Panc1 (cell line): ENCODE measurements at regions of chr10 and their contacts with region 1.

Region 1: GRCh38 chr10:30724296-30724695 is 94.7 kb upstream of the LYZL2 start:
- DNase-seq: no peak
- ATAC-seq: no peak
- H3K4me3 ChIP-seq: no peak overlapping the region
- H3K27ac ChIP-seq: no peak overlapping the region
- H3K4me1 ChIP-seq: no peaks in the 10 kb centered on the region
- H3K27me3 ChIP-seq: no peaks in the 10 kb centered on the region
- CTCF ChIP-seq: no peak

Region 2: GRCh38 chr10:30762620-30763019 is 38.3 kb after region 1 on chr10:
- CTCF ChIA-PET with region 1: no interaction called
- POLR2A ChIA-PET with region 1: interaction called, 10 read pairs
- in situ Hi-C with region 1: no loop called
- intact Hi-C with region 1: no loop called
- DNase-seq: no peak
- ATAC-seq: no peak
- H3K4me3 ChIP-seq: no peak overlapping the region
- H3K27ac ChIP-seq: no peak overlapping the region
- H3K4me1 ChIP-seq: no peaks in the 10 kb centered on the region
- H3K27me3 ChIP-seq: no peaks in the 10 kb centered on the region
- CTCF ChIP-seq: no peak

Region 3: GRCh38 chr10:30783939-30784500 is 59.7 kb after region 1 on chr10:
- CTCF ChIA-PET with region 1: no interaction called
- POLR2A ChIA-PET with region 1: no interaction called
- in situ Hi-C with region 1: no loop called
- intact Hi-C with region 1: loop called (anchors 2 kb)
- DNase-seq: peak; percentile 42
- ATAC-seq: peak; percentile 75
- H3K4me3 ChIP-seq: peak overlapping the region in 1 of 2 experiments; percentile 30; a peak in 1 of 4 replicates
- H3K27ac ChIP-seq: no peak overlapping the region
- H3K4me1 ChIP-seq: no peaks in the 10 kb centered on the region
- H3K27me3 ChIP-seq: no peaks in the 10 kb centered on the region
- CTCF ChIP-seq: peak; percentile 85

Region 4: DNA sequence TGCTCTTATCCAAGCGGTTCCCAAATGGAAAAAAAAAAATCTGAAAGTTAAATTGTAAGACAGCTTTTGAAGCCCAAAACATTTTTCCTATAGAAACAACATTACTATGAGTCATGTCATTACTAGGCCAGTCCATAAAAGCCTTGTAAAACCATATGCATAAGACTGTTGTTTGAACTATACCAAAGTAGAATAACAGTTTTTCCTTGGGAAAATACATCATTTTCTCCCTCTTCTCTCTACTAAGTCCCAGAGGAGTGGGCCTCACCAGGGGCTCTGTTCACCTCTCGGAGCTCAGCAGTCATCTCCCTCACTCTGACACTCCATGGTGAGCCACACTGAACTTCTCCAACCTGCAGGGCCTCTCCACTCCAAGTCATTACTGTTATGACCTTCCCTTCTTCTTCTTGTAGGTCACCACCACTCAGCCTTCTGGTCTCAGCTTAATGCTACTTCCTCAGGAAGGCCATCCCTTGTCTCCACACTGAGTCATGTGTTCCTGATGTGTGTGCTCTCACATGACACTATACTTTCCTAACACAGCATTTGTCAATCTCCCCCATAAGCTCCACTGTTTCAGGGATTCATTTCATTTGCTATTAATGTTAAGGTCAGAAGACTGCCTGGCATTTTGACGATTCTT is 274.9 kb after region 1 on chr10:
- CTCF ChIA-PET with region 1: no interaction called
- POLR2A ChIA-PET with region 1: interaction called, 12 read pairs
- in situ Hi-C with region 1: no loop called
- intact Hi-C with region 1: no loop called
- DNase-seq: no peak
- ATAC-seq: peak; percentile 70
- H3K4me3 ChIP-seq: no peak overlapping the region
- H3K27ac ChIP-seq: no peak overlapping the region
- H3K4me1 ChIP-seq: peaks cover 6% of the 10 kb centered on the region; the same call in 1 of the 2 replicates
- H3K27me3 ChIP-seq: no peaks in the 10 kb centered on the region
- CTCF ChIP-seq: no peak